ENCODE measurements at regions of chr17 and their contacts with region 1.

Region 1: GRCh38 chr17:40443583-40444327 is 505 bp downstream of the IGFBP4 start:
- DNase-seq: no peak
- ATAC-seq: peak; percentile 89
- H3K4me3 ChIP-seq: peak overlapping the region; percentile 41 to 63
- H3K27ac ChIP-seq: no peak overlapping the region
- H3K4me1 ChIP-seq: peaks cover 11% of the 10 kb centered on the region
- H3K27me3 ChIP-seq: no peaks in the 10 kb centered on the region
- CTCF ChIP-seq: peak; percentile 82

Region 2: GRCh38 chr17:40480501-40481003 is 36.8 kb after region 1 on chr17:
- CTCF ChIA-PET with region 1: interaction called, 12 read pairs
- POLR2A ChIA-PET with region 1: no interaction called
- in situ Hi-C with region 1: no loop called
- intact Hi-C with region 1: loop called (anchors 5 kb)
- DNase-seq: no peak
- ATAC-seq: no peak
- H3K4me3 ChIP-seq: no peak overlapping the region
- H3K27ac ChIP-seq: no peak overlapping the region
- H3K4me1 ChIP-seq: no peaks in the 10 kb centered on the region
- H3K27me3 ChIP-seq: no peaks in the 10 kb centered on the region
- CTCF ChIP-seq: no peak

Region 3: DNA sequence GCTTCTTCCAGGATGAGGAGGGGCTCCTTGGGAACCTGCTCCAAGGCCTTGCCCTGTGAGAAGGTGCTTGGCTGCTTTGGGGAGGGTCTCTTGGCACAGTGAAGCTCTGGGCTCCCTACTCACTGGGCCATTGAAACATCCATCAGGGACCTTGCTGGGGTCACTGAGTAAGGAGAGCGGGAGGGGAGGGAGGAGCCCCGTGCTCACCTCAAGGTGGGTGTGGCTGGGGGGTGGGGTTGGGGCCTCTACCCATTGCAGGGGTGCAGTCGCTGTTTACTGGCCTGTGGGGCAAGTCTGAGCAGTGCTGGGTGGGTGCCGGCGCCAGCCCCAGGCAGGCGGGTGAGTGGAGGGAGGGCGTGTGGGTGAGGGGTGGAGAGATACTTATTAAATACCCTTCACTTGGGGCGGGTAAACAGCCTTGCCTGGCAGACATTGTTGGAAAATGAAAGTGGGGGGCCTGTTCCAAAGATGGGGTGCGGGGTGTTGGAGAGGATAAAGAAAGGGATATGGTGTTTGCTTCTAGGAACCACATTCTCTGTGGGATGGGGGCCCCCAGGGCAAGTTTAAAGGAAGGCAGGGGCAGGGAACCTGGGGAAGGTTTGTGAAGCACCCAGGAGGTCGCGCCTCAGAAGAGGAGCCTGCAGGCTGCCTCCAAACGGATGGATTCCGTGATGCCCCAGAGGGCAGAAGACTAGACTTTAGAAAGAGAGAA is 47.9 kb after region 1 on chr17:
- CTCF ChIA-PET with region 1: interaction called, 11 read pairs
- POLR2A ChIA-PET with region 1: no interaction called
- in situ Hi-C with region 1: no loop called
- intact Hi-C with region 1: no loop called
- DNase-seq: no peak
- ATAC-seq: no peak
- H3K4me3 ChIP-seq: no peak overlapping the region
- H3K27ac ChIP-seq: no peak overlapping the region
- H3K4me1 ChIP-seq: peaks cover 6% of the 10 kb centered on the region
- H3K27me3 ChIP-seq: no peaks in the 10 kb centered on the region
- CTCF ChIP-seq: no peak